ENCODE measurements at regions of chr7 and their contacts with region 1.

Region 1: GRCh38 chr7:19117091-19117869 is at the start of gene TWIST1:
- ATAC-seq: peak; percentile 66 to 86 (median 71)
- H3K4me3 ChIP-seq: peak within 1 kb of the TSS; percentile 31 to 51 (median 37)
- H3K27ac ChIP-seq: no peak within 1 kb of the TSS
- H3K4me1 ChIP-seq: peaks cover 3 to 6% of the 10 kb centered on the region in 2 donors
- total RNA-seq, gene TWIST1: 0.60 to 327 (median 13.8) TPM

Region 2: GRCh38 chr7:18352339-18353255 is 764.7 kb before region 1 on chr7:
- in situ Hi-C with region 1: loop called in 2 of 9 experiments (anchors 25 kb)
- ATAC-seq: peak; percentile 50 to 75 (median 64)
- H3K4me3 ChIP-seq: no peak overlapping the region
- H3K27ac ChIP-seq: no peak overlapping the region
- H3K4me1 ChIP-seq: peaks cover 16 to 20% of the 10 kb centered on the region in 2 donors

Region 3: DNA sequence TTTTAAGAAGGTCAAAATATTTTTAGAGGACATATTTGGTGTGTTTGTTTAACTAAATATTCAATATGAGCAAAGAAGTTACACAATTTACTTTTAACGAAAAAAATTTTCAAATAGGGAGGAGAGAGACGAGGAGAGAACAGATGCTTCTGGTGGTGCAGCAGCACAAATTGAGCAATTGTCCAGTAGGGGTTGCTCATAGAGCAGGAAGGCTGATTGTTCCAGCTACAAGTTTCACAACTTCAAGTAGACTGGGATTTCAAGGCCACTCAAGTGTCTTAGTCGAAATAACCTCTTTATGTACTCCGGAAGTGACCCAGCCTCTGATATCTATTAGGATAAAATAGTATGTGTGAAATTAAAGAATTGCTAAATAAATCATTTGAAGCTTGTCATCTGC is 423.9 kb before region 1 on chr7:
- in situ Hi-C with region 1: loop called in 3 of 9 experiments (anchors 25 kb)
- ATAC-seq: peak in 4 of 8 experiments; percentile 53 to 100 (median 97)
- H3K4me3 ChIP-seq: no peak overlapping the region
- H3K27ac ChIP-seq: no peak overlapping the region
- H3K4me1 ChIP-seq: peaks cover 0 to 8% of the 10 kb centered on the region in 2 donors

Region 4: DNA sequence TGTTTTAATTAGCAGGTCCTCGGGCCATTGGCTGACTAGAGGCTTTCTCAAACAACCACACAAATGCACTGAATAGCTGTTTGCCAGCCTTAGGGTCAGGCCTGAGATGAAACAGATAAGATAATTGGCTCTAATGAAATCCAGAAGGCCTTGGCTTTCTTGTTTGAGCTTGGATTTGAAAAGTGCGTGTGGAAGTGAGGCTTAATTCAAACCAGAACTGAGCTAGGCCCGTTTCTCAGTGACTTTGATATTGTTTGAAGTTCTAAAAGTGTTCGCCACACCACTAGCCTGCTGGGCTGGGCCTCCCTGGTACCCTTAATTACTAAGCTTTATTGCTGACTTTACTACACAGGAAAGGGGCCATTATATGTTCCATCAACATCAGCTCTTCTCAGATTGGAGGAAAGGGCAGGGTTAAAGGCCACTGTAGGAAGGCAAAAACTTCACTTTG is 270.5 kb before region 1 on chr7:
- in situ Hi-C with region 1: no loop called
- ATAC-seq: peak in 1 of 8 experiments; percentile 55
- H3K4me3 ChIP-seq: no peak overlapping the region
- H3K27ac ChIP-seq: no peak overlapping the region
- H3K4me1 ChIP-seq: no peaks in the 10 kb centered on the region

Region 5: DNA sequence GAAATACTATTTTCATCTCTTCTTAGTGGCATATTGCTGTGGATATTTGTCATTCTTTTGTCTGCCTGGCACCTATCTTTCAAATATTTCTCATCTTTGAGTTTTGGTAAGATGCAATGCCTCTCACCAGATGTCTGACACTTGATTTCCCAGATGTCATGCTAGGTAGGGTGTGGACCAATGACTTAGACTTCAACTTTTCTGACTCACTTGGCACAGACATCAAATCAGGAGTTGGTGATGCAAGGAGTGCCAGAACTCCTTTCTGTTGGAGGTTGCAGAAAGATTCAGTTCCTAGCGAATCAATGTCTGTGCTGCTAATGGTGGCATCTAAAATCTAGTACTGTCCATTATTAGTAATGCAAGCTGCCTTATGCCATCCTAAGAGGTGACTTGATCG is 244.8 kb after region 1 on chr7:
- in situ Hi-C with region 1: no loop called
- ATAC-seq: peak in 2 of 8 experiments; percentile 100
- H3K4me3 ChIP-seq: no peak overlapping the region
- H3K27ac ChIP-seq: no peak overlapping the region
- H3K4me1 ChIP-seq: no peaks in the 10 kb centered on the region

Region 6: GRCh38 chr7:19442016-19442785 is 324.9 kb after region 1 on chr7:
- in situ Hi-C with region 1: loop called in 1 of 9 experiments (anchors 25 kb)
- ATAC-seq: peak in 3 of 8 experiments; percentile 99
- H3K4me3 ChIP-seq: no peak overlapping the region
- H3K27ac ChIP-seq: no peak overlapping the region
- H3K4me1 ChIP-seq: no peaks in the 10 kb centered on the region

Region 7: GRCh38 chr7:19665399-19666008 is 548.2 kb after region 1 on chr7:
- in situ Hi-C with region 1: loop called in 4 of 9 experiments (anchors 25 kb)
- ATAC-seq: peak in 2 of 8 experiments; percentile 33 to 36
- H3K4me3 ChIP-seq: no peak overlapping the region
- H3K27ac ChIP-seq: no peak overlapping the region
- H3K4me1 ChIP-seq: no peaks in the 10 kb centered on the region

Measured in motor neuron (in vitro differentiated cells).